ENCODE measurements at regions of chr10 and their contacts with region 1.

Region 1: DNA sequence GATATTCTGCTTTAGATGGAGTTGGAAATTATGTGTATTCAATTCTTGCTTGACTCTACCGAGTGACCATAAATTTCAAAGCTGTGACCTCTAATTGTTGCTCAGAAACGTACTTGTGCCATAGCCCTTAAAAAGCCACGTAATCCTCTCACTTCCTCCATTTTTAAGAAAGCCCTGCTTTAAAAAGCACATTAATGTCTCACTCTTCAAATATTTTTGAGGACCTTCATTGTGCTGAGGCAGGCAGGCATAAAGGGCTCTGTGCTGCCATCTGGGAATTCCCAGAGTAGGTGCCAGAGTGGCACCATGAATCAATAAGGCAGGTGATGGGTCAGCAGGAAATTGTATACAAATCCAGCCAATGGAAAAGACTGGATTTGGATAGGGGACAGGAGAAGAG is 97.7 kb upstream of the FAM204A start:
- DNase-seq: no peak

Region 2: DNA sequence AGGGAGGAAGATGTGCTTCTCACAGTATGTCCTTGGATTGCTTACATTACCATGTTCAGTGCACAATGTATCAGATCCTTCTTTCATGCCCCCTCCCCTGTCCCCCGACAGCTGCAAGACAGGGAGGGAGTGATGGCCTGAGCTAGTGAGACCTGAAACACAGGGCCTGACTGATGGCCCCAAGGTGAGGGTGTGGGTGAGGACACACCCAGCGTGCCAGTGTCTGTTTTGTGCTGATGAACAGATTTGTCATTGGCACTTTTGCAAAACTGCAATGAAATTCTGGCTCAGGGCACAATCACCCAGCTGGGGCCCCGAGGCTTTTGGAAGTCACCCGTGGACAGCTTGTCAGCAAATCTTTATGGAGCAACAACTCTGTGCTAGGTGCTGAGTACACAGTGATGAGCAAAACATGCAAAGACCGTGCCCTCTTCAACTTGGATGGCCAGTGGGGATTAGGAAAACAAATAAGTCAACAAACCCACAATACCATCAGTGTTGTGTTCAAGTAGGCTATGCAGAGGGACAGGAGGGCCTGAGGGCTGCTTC is 956.7 kb before region 1 on chr10:
- intact Hi-C with region 1: loop called in 1 of 2 experiments (anchors 10 kb)
- DNase-seq: no peak

Region 3: GRCh38 chr10:118272149-118272721 is 167.6 kb before region 1 on chr10:
- intact Hi-C with region 1: no loop called
- DNase-seq: no peak

Region 4: GRCh38 chr10:118394301-118395200 is 45.3 kb before region 1 on chr10:
- intact Hi-C with region 1: no loop called
- DNase-seq: no peak

Measured in posterior vena cava (tissue), 2 donors.